IMR-90 (cell line): ENCODE measurements at regions of chr14 and their contacts with region 1.

Region 1: GRCh38 chr14:76876076-76876475 is 49.9 kb downstream of the LRRC74A start:
- DNase-seq: peak; percentile 73
- ATAC-seq: peak; percentile 98
- H3K4me3 ChIP-seq: no peak overlapping the region
- H3K27ac ChIP-seq: no peak overlapping the region
- H3K4me1 ChIP-seq: no peaks in the 10 kb centered on the region
- H3K27me3 ChIP-seq: peaks cover 6% of the 10 kb centered on the region
- CTCF ChIP-seq: peak; percentile 99
- POLR2A ChIP-seq: peak; percentile 58
- RAD21 ChIP-seq: peak; percentile 100

Region 2: DNA sequence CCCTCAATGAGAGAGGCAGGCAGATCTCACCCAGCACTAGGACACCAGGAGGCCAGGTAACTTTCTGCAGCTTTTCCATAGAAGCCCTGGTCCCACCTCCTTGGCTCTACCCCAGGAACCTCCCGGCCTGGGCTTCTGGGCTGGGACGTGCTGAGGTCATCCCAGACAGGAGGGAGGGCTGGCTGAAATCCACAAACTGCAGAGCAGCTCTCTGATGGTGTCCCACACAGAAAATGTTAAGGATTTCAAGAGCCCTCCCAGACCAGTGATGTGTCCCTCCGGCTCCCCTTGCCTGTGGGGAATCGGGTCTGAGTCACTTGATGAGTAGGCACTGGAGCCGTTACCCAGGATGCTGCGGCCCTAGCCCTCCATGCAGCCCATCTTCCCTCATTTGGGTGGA is 376.1 kb before region 1 on chr14:
- CTCF ChIA-PET with region 1: no interaction called
- POLR2A ChIA-PET with region 1: no interaction called
- dilution Hi-C with region 1: no loop called
- in situ Hi-C with region 1: no loop called
- intact Hi-C with region 1: no loop called
- DNase-seq: peak; percentile 20
- ATAC-seq: no peak
- H3K4me3 ChIP-seq: no peak overlapping the region
- H3K27ac ChIP-seq: no peak overlapping the region
- H3K4me1 ChIP-seq: no peaks in the 10 kb centered on the region
- H3K27me3 ChIP-seq: no peaks in the 10 kb centered on the region
- CTCF ChIP-seq: no peak
- POLR2A ChIP-seq: no peak
- RAD21 ChIP-seq: no peak

Region 3: GRCh38 chr14:76752744-76753143 is 123.3 kb before region 1 on chr14:
- CTCF ChIA-PET with region 1: no interaction called
- POLR2A ChIA-PET with region 1: no interaction called
- dilution Hi-C with region 1: no loop called
- in situ Hi-C with region 1: no loop called
- intact Hi-C with region 1: no loop called
- DNase-seq: no peak
- ATAC-seq: no peak
- H3K4me3 ChIP-seq: no peak overlapping the region
- H3K27ac ChIP-seq: no peak overlapping the region
- H3K4me1 ChIP-seq: no peaks in the 10 kb centered on the region
- H3K27me3 ChIP-seq: no peaks in the 10 kb centered on the region; the same call in 1 of the 2 replicates
- CTCF ChIP-seq: no peak
- POLR2A ChIP-seq: no peak
- RAD21 ChIP-seq: no peak

Region 4: GRCh38 chr14:76918751-76919543 is 42.9 kb after region 1 on chr14:
- CTCF ChIA-PET with region 1: interaction called, 16 read pairs
- POLR2A ChIA-PET with region 1: interaction called, 3 read pairs
- dilution Hi-C with region 1: no loop called
- in situ Hi-C with region 1: no loop called
- intact Hi-C with region 1: loop called (anchors 1 kb)
- DNase-seq: peak; percentile 99
- ATAC-seq: peak; percentile 82
- H3K4me3 ChIP-seq: no peak overlapping the region
- H3K27ac ChIP-seq: peak overlapping the region; percentile 97
- H3K4me1 ChIP-seq: peaks cover 48% of the 10 kb centered on the region
- H3K27me3 ChIP-seq: no peaks in the 10 kb centered on the region
- CTCF ChIP-seq: 0 out of 2 replicates have a peak, but pooled peaks have one; percentile 13
- POLR2A ChIP-seq: peak; percentile 63
- RAD21 ChIP-seq: peak; percentile 31

Region 5: GRCh38 chr14:77067632-77068514 is 191.8 kb after region 1 on chr14:
- CTCF ChIA-PET with region 1: interaction called, 111 read pairs
- POLR2A ChIA-PET with region 1: no interaction called
- dilution Hi-C with region 1: no loop called
- in situ Hi-C with region 1: no loop called
- intact Hi-C with region 1: loop called (anchors 1 kb)
- DNase-seq: peak; percentile 57
- ATAC-seq: peak; percentile 85
- H3K4me3 ChIP-seq: no peak overlapping the region
- H3K27ac ChIP-seq: no peak overlapping the region
- H3K4me1 ChIP-seq: peaks cover 3% of the 10 kb centered on the region
- H3K27me3 ChIP-seq: no peaks in the 10 kb centered on the region
- CTCF ChIP-seq: peak; percentile 91
- POLR2A ChIP-seq: no peak
- RAD21 ChIP-seq: peak; percentile 98

Region 6: GRCh38 chr14:77124345-77125280 is 248.5 kb after region 1 on chr14:
- CTCF ChIA-PET with region 1: interaction called, 4 read pairs
- POLR2A ChIA-PET with region 1: no interaction called
- dilution Hi-C with region 1: no loop called
- in situ Hi-C with region 1: no loop called
- intact Hi-C with region 1: loop called (anchors 1 kb)
- DNase-seq: peak; percentile 16
- ATAC-seq: peak; percentile 90
- H3K4me3 ChIP-seq: peak overlapping the region; percentile 62
- H3K27ac ChIP-seq: no peak overlapping the region
- H3K4me1 ChIP-seq: no peaks in the 10 kb centered on the region; the same call in 1 of the 2 replicates
- H3K27me3 ChIP-seq: peaks cover 56% of the 10 kb centered on the region
- CTCF ChIP-seq: peak; percentile 66
- POLR2A ChIP-seq: no peak
- RAD21 ChIP-seq: 0 out of 2 replicates have a peak, but pooled peaks have one; percentile 15

Region 7: DNA sequence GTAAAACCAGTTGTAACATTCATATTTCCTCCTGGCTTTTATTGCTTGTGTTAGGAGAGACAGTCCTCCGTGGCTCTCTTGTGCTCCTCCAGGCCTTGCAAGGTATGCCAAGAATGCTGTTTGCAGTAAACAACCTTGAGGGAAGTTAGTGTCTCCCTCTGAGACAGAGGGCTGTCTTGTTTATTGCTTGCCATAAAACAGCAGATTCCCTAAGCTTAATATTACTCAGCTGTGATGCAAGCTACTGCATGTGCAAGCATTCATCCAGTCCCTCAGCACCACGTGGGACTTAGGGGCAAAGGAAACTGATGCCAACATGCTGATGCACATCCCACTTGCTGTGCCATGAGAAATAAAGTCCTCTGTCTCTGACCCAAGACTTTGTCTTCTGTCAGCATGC is 438.0 kb after region 1 on chr14:
- CTCF ChIA-PET with region 1: no interaction called
- POLR2A ChIA-PET with region 1: no interaction called
- dilution Hi-C with region 1: no loop called
- in situ Hi-C with region 1: loop called (anchors 25 kb)
- intact Hi-C with region 1: loop called (anchors 5 kb)
- DNase-seq: peak; percentile 89
- ATAC-seq: peak; percentile 92
- H3K4me3 ChIP-seq: no peak overlapping the region
- H3K27ac ChIP-seq: peak overlapping the region; percentile 25
- H3K4me1 ChIP-seq: peaks cover 15% of the 10 kb centered on the region
- H3K27me3 ChIP-seq: no peaks in the 10 kb centered on the region
- CTCF ChIP-seq: no peak
- POLR2A ChIP-seq: no peak
- RAD21 ChIP-seq: 0 out of 2 replicates have a peak, but pooled peaks have one; percentile 6